ENCODE measurements at regions of chr7 and their contacts with region 1.

Region 1: GRCh38 chr7:33062782-33063443 is 337 bp upstream of the NT5C3A start:
- DNase-seq: peak; percentile 88 to 98 (median 92)
- ATAC-seq: peak; percentile 91
- H3K4me3 Mint-ChIP-seq: peak overlapping the region; percentile 89 to 97 (median 96)
- H3K27ac Mint-ChIP-seq: peak overlapping the region; percentile 92 to 98 (median 96)
- H3K4me1 Mint-ChIP-seq: peaks cover 14 to 46% (median 40%) of the 10 kb centered on the region in 4 donors
- H3K27me3 Mint-ChIP-seq: no peaks in the 10 kb centered on the region

Region 2: GRCh38 chr7:32809871-32810270 is 253.0 kb before region 1 on chr7:
- POLR2A ChIA-PET with region 1: no interaction called
- DNase-seq: no peak
- ATAC-seq: no peak
- H3K4me3 Mint-ChIP-seq: no peak overlapping the region
- H3K27ac Mint-ChIP-seq: no peak overlapping the region
- H3K4me1 Mint-ChIP-seq: no peaks in the 10 kb centered on the region
- H3K27me3 Mint-ChIP-seq: peaks cover 0 to 4% (median 1%) of the 10 kb centered on the region in 5 donors

Region 3: GRCh38 chr7:33024189-33024757 is 38.6 kb before region 1 on chr7:
- POLR2A ChIA-PET with region 1: no interaction called
- DNase-seq: no peak
- ATAC-seq: no peak
- H3K4me3 Mint-ChIP-seq: no peak overlapping the region
- H3K27ac Mint-ChIP-seq: no peak overlapping the region
- H3K4me1 Mint-ChIP-seq: peaks cover 0 to 4% (median 2%) of the 10 kb centered on the region in 4 donors
- H3K27me3 Mint-ChIP-seq: no peaks in the 10 kb centered on the region

Region 4: GRCh38 chr7:33040803-33041516 is 22.0 kb before region 1 on chr7:
- POLR2A ChIA-PET with region 1: interaction called, 36 read pairs
- DNase-seq: peak; percentile 22 to 85 (median 64)
- ATAC-seq: peak; percentile 99 to 100
- H3K4me3 Mint-ChIP-seq: peak overlapping the region; percentile 62 to 87 (median 78)
- H3K27ac Mint-ChIP-seq: peak overlapping the region; percentile 86 to 95 (median 90)
- H3K4me1 Mint-ChIP-seq: peaks cover 15 to 71% (median 43%) of the 10 kb centered on the region in 4 donors
- H3K27me3 Mint-ChIP-seq: no peaks in the 10 kb centered on the region

Region 5: DNA sequence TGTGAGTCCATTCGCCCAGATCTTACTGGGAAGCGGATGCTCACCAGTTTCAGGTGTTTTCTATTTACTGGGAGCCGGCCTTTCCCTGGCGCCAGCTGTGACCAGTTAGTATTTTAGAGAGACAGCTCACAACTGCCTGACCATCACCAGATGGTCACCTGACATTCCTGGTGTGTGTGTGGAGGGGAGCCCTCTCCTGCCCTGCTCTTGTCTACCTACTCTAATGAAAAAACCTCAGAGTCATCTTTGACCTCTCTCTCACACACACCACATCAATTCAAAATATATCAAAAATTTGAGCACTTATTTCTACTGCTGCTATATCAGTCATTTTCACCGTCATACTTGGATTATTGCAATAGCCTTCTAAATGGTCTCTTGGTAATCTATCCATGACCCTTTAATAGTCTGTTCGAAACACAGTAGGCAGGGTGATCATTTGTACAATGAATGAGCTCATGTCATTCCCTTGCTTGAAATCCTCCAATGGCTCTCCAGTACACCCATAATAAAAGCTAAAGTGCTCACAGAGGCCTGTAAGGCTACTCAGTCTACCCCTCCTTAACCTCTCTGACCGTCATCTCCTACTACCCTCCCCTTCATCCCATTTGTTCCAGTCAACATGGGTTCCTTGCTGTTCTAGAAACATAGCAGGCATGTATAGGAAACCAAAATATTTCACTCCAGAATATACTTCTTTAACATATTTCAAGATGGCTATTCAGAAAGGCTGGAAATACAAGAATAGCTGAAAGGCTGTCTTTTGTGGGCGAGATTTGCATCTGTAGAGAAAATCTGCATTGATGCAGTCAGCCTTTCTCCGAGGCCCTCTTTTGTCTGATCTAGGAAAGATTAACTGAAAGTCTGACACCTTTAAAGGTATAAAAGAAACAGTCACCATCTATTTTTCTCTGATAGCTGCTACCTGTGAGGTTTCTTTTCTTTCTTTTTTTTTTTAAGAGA is 17.1 kb after region 1 on chr7:
- POLR2A ChIA-PET with region 1: no interaction called
- DNase-seq: no peak
- ATAC-seq: no peak
- H3K4me3 Mint-ChIP-seq: no peak overlapping the region
- H3K27ac Mint-ChIP-seq: no peak overlapping the region
- H3K4me1 Mint-ChIP-seq: peaks cover 7 to 17% (median 15%) of the 10 kb centered on the region in 4 donors
- H3K27me3 Mint-ChIP-seq: peaks cover 0 to 13% (median 7%) of the 10 kb centered on the region in 5 donors

Region 6: DNA sequence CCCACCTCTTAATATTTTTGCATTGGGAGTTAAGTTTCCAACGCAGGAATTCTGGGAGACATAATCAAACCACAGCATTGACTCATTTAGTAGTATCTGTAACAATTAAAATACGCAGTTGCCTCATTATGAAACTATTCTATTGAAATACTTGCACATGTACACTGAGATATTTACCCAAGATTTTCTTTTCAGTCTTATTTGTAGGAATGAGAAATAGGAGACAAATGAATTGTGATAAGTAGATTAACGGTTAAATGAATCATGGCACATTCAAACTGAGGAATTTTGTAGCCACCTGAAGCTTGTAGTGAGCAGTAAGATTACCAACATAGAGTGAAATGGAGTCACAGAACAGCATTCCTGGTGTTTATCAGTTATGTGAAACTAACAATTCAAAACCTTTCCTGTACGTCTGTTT is 28.2 kb after region 1 on chr7:
- POLR2A ChIA-PET with region 1: no interaction called
- DNase-seq: no peak
- ATAC-seq: no peak
- H3K4me3 Mint-ChIP-seq: no peak overlapping the region
- H3K27ac Mint-ChIP-seq: peak overlapping the region in 1 of 10 donors; percentile 44
- H3K4me1 Mint-ChIP-seq: peaks cover 0 to 4% (median under 1%) of the 10 kb centered on the region in 4 donors
- H3K27me3 Mint-ChIP-seq: no peaks in the 10 kb centered on the region

Region 7: GRCh38 chr7:33109005-33109757 is 46.3 kb after region 1 on chr7 and contains the start of gene RP9:
- POLR2A ChIA-PET with region 1: interaction called, 11 read pairs
- DNase-seq: peak; percentile 65 to 83 (median 76)
- ATAC-seq: peak; percentile 87 to 93
- H3K4me3 Mint-ChIP-seq: peak within 1 kb of the TSS; percentile 84 to 93 (median 87)
- H3K27ac Mint-ChIP-seq: peak within 1 kb of the TSS; percentile 77 to 91 (median 83)
- H3K4me1 Mint-ChIP-seq: peaks cover 13 to 50% (median 42%) of the 10 kb centered on the region in 4 donors
- H3K27me3 Mint-ChIP-seq: peaks cover 3 to 15% (median 5%) of the 10 kb centered on the region in 5 donors
- polyA plus RNA-seq, gene RP9: 15.3 to 23.9 (median 20.3) TPM